ENCODE measurements at regions of chr9 and their contacts with region 1.

Region 1: DNA sequence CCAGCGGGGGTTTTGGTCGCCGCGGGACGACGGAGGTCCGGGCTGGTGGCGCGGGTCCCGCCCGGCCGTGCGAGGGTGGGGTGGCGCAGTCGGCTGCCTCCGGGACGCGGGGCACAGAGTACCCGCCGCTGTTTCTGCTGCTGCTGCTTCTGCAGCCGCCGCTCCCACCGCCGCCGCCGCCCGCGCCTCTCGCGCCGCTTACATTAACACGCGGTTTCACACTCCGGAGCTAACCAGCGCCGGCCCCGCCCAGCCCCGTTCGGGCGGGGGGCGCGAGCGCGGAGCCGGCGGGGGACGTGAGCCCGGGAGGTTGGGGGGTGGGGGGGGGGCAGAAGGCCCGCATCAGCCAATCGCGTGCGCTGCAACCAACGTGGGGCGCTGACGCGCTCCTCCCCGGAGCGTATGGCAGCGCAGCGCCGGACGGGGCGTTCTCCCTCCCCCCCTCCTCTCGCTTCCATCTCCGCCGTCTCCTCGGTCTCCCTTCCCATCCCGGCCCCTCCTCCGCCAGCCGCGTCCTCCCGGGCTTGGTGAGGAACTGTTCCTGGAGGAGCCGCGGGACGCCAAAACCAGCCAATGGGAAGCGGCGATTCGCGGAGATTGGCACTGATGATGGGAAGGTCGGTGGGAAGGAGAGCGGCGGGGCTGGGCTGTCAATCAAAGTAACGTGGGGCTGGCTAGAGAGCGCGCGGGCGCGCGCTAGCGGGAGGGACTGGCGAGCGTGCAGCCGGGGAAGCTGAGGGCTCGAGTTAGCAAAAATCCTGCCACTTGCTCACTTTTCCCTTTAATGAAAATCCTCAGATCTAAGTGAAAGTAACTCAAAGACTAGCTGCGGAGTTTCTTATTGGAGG is at the start of gene TLE1:
- DNase-seq: peak; percentile 95
- H3K4me3 ChIP-seq: peak within 1 kb of the TSS; percentile 73 to 76
- H3K27ac ChIP-seq: peak within 1 kb of the TSS; percentile 43 to 54
- H3K4me1 ChIP-seq: peaks cover 11 to 22% of the 10 kb centered on the region in 2 experiments; a peak in 2 of 4 replicates
- H3K27me3 ChIP-seq: no peaks in the 10 kb centered on the region
- CTCF ChIP-seq: peak; percentile 7; the same call in 1 of the 2 replicates
- EP300 ChIP-seq: peak in 1 of 2 experiments; percentile 10; a peak in 2 of 4 replicates
- RAD21 ChIP-seq: peak; percentile 5; the same call in 1 of the 2 replicates
- polyA plus RNA-seq, gene TLE1: 33.0 and 34.8 TPM in 2 replicates

Region 2: DNA sequence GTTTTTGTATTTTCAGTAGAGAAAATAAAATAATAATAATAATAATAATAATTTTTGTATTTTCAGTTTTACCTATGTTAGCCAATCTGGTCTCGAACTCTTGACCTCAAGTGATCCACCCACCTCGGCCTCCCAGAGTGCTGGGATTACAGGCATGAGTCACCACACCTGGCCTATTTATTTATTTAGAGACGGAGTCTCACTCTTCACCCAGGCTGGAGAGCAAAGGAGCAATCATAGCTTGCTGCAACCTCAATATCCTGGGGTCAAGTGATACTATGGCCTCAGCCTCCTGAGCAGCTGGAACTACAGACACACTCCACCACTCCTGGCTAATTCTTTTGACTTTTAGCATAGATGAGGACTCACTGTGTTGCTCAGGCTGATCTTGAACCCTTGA is 167.7 kb before region 1 on chr9:
- CTCF ChIA-PET with region 1: interaction called, 19 read pairs
- POLR2A ChIA-PET with region 1: no interaction called
- DNase-seq: no peak
- H3K4me3 ChIP-seq: no peak overlapping the region
- H3K27ac ChIP-seq: no peak overlapping the region
- H3K4me1 ChIP-seq: peaks cover 0 to 3% of the 10 kb centered on the region in 2 experiments; a peak in 2 of 4 replicates
- H3K27me3 ChIP-seq: no peaks in the 10 kb centered on the region
- CTCF ChIP-seq: no peak
- EP300 ChIP-seq: no peak
- RAD21 ChIP-seq: no peak

Region 3: DNA sequence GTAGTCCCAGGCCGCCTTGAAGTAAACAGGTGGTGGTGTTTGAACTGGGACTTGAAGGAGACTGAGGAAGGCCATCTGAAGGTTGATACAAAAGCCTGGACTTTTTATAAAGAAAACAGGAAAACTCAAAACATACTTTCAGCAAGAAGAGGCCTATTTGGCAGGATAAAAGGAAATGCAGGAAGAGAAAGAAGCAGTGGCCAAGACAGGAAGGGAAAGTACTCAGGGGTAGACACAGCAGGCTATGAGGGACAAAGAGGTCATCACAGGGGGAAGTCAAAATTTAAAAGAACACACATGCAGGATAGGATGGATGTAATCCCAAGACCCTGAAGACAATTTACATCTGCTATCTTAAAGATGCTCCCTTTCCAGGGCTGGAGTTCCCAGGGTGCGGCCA is 13.2 kb before region 1 on chr9:
- CTCF ChIA-PET with region 1: interaction called, 15 read pairs
- POLR2A ChIA-PET with region 1: no interaction called
- DNase-seq: no peak
- H3K4me3 ChIP-seq: no peak overlapping the region
- H3K27ac ChIP-seq: no peak overlapping the region
- H3K4me1 ChIP-seq: no peaks in the 10 kb centered on the region
- H3K27me3 ChIP-seq: no peaks in the 10 kb centered on the region
- CTCF ChIP-seq: no peak
- EP300 ChIP-seq: no peak
- RAD21 ChIP-seq: no peak